ENCODE measurements at regions of chr7 and their contacts with region 1.

Region 1: GRCh38 chr7:134632937-134633540 is 13.6 kb upstream of the BPGM start:
- DNase-seq: peak; percentile 58
- H3K4me3 ChIP-seq: no peak overlapping the region
- H3K27ac ChIP-seq: no peak overlapping the region
- H3K4me1 ChIP-seq: no peaks in the 10 kb centered on the region
- H3K27me3 ChIP-seq: peaks cover 26% of the 10 kb centered on the region
- CTCF ChIP-seq: peak; percentile 69

Region 2: DNA sequence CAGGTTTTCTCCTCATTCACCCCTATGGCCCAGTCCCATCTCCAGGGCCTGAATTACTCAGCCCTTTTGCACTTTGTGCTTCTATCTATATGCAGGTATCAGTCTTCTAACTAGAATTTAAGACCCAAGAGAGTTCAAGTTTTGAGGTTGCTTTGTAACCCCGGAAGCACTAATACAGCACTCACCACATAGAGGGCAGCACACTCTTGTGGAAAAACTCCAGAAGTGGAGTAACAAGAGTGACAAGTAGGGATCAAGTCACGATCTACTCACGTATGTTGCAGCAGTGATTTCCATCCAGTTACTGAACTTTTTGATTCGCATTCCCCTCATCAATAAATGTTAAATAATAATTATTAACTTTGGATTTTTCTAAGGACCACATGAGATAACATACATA is 1702.2 kb before region 1 on chr7:
- CTCF ChIA-PET with region 1: no interaction called
- POLR2A ChIA-PET with region 1: no interaction called
- intact Hi-C with region 1: no loop called
- DNase-seq: peak; percentile 52
- H3K4me3 ChIP-seq: no peak overlapping the region
- H3K27ac ChIP-seq: no peak overlapping the region
- H3K4me1 ChIP-seq: peaks cover 21% of the 10 kb centered on the region
- H3K27me3 ChIP-seq: no peaks in the 10 kb centered on the region
- CTCF ChIP-seq: peak; percentile 61

Region 3: DNA sequence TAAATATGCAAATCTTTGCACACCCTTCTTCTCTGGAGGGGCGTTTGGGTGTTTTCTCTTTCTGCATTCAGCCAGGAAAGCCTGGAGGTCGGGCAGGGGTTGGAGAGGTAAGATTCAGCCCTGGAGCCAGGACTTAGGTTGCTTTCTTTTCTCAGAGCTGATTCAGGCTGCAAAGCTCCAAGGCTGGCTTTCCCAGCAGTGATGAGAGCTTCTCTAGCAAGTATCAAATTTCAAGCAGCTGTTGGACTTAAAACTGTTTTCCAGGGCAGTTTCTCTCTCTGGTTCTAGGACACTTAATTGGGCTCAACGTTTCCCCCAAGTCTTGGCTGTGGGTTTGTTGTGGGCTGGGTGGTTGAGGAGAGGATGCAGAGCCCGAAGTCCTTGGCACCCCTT is 105.1 kb before region 1 on chr7:
- CTCF ChIA-PET with region 1: no interaction called
- POLR2A ChIA-PET with region 1: no interaction called
- intact Hi-C with region 1: no loop called
- DNase-seq: peak; percentile 15
- H3K4me3 ChIP-seq: no peak overlapping the region
- H3K27ac ChIP-seq: no peak overlapping the region
- H3K4me1 ChIP-seq: no peaks in the 10 kb centered on the region
- H3K27me3 ChIP-seq: no peaks in the 10 kb centered on the region
- CTCF ChIP-seq: no peak

Region 4: GRCh38 chr7:134701272-134701671 is 68.2 kb after region 1 on chr7:
- CTCF ChIA-PET with region 1: interaction called, 7 read pairs
- POLR2A ChIA-PET with region 1: no interaction called
- intact Hi-C with region 1: loop called (anchors 5 kb)
- DNase-seq: peak; percentile 45
- H3K4me3 ChIP-seq: no peak overlapping the region
- H3K27ac ChIP-seq: no peak overlapping the region
- H3K4me1 ChIP-seq: no peaks in the 10 kb centered on the region
- H3K27me3 ChIP-seq: no peaks in the 10 kb centered on the region
- CTCF ChIP-seq: peak; percentile 58

Region 5: DNA sequence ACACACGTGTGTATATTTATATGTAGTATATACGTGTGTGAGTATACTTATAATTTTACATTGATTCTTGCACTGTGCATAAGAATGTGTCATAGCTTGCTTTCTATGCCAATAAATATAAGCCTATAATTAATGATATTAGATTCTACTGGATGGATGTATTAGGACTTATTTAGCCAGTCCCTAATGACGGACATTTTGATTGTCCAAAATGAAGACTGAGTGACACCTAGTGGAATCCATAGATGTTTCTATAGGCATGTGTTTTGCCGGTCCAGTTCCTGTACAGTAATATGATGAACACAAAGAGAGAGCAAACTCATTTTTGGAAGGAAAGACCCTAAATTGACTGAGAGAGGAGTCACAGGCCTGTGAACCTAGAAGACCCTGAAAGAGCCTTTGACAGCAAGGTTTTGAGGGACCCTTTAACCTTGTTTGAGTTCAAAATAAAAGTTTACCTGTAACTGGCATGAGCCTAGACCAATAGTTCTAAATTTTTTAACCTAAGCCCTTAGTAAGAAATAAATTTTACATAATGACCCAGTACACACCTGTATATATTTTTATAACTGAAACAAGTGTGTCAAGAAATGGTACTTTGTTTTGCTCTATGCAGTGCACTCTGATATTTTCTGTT is 310.8 kb after region 1 on chr7:
- CTCF ChIA-PET with region 1: interaction called, 5 read pairs
- POLR2A ChIA-PET with region 1: no interaction called
- intact Hi-C with region 1: loop called (anchors 2 kb)
- DNase-seq: peak; percentile 68
- H3K4me3 ChIP-seq: no peak overlapping the region
- H3K27ac ChIP-seq: no peak overlapping the region
- H3K4me1 ChIP-seq: peaks cover 4% of the 10 kb centered on the region
- H3K27me3 ChIP-seq: no peaks in the 10 kb centered on the region
- CTCF ChIP-seq: peak; percentile 64